ENCODE measurements at regions of chr16 and their contacts with region 1.

Region 1: GRCh38 chr16:27461483-27462171 is 59.7 kb downstream of the IL21R start:
- DNase-seq: no peak
- ATAC-seq: peak in 1 of 8 donors; percentile 1
- H3K4me3 ChIP-seq: no peak overlapping the region
- H3K27ac ChIP-seq: peak overlapping the region in 5 of 10 donors; percentile 4 to 73 (median 53)
- H3K4me1 ChIP-seq: peaks cover 4 to 35% (median 28%) of the 10 kb centered on the region in 9 donors
- H3K27me3 ChIP-seq: no peaks in the 10 kb centered on the region
- CTCF ChIP-seq: no peak

Region 2: GRCh38 chr16:27154705-27155521 is 306.7 kb before region 1 on chr16:
- intact Hi-C with region 1: loop called in 4 of 10 experiments (anchors 1 to 5 kb)
- DNase-seq: peak; percentile 51 to 71
- ATAC-seq: peak in 5 of 8 donors; percentile 58 to 84 (median 72)
- H3K4me3 ChIP-seq: no peak overlapping the region
- H3K27ac ChIP-seq: no peak overlapping the region
- H3K4me1 ChIP-seq: peaks cover 0 to 6% (median 0%) of the 10 kb centered on the region in 9 donors
- H3K27me3 ChIP-seq: no peaks in the 10 kb centered on the region
- CTCF ChIP-seq: peak; percentile 89 to 99 (median 95)

Region 3: GRCh38 chr16:27538508-27538907 is 76.9 kb after region 1 on chr16:
- intact Hi-C with region 1: no loop called
- DNase-seq: peak in 1 of 2 donors; percentile 31
- ATAC-seq: peak in 6 of 8 donors; percentile 47 to 76 (median 64)
- H3K4me3 ChIP-seq: no peak overlapping the region
- H3K27ac ChIP-seq: peak overlapping the region in 1 of 10 donors; percentile 33
- H3K4me1 ChIP-seq: peaks cover 0 to 18% (median 7%) of the 10 kb centered on the region in 9 donors
- H3K27me3 ChIP-seq: no peaks in the 10 kb centered on the region
- CTCF ChIP-seq: no peak

Region 4: GRCh38 chr16:27549859-27550581 is 88.4 kb after region 1 on chr16 and contains the starts of genes GTF3C1 and KATNIP:
- intact Hi-C with region 1: no loop called
- DNase-seq: peak; percentile 100
- ATAC-seq: peak; percentile 99 to 100 (median 100)
- H3K4me3 ChIP-seq: peak within 1 kb of the TSS; percentile 53 to 93 (median 82)
- H3K27ac ChIP-seq: peak within 1 kb of the TSS; percentile 65 to 92 (median 87)
- H3K4me1 ChIP-seq: peaks cover 8 to 46% (median 39%) of the 10 kb centered on the region in 9 donors
- H3K27me3 ChIP-seq: no peaks in the 10 kb centered on the region
- CTCF ChIP-seq: no peak
- total RNA-seq, gene GTF3C1: 48.1 to 84.5 (median 62.8) TPM
- total RNA-seq, gene KATNIP: 8.6 to 25.0 (median 16.8) TPM